ENCODE measurements at regions of chr6 and their contacts with region 1.

Region 1: GRCh38 chr6:144321839-144322591 is 36.9 kb downstream of the UTRN start:
- DNase-seq: no peak
- H3K4me3 ChIP-seq: no peak overlapping the region
- H3K27ac ChIP-seq: no peak overlapping the region
- H3K4me1 ChIP-seq: no peaks in the 10 kb centered on the region
- CTCF ChIP-seq: no peak

Region 2: GRCh38 chr6:142702501-142703460 is 1619.2 kb before region 1 on chr6:
- CTCF ChIA-PET with region 1: no interaction called
- POLR2A ChIA-PET with region 1: no interaction called
- intact Hi-C with region 1: no loop called
- DNase-seq: no peak
- H3K4me3 ChIP-seq: no peak overlapping the region
- H3K27ac ChIP-seq: no peak overlapping the region
- H3K4me1 ChIP-seq: peaks cover 18% of the 10 kb centered on the region
- CTCF ChIP-seq: no peak

Region 3: GRCh38 chr6:144340541-144341371 is 18.7 kb after region 1 on chr6:
- CTCF ChIA-PET with region 1: no interaction called
- POLR2A ChIA-PET with region 1: no interaction called
- intact Hi-C with region 1: no loop called
- DNase-seq: no peak
- H3K4me3 ChIP-seq: no peak overlapping the region
- H3K27ac ChIP-seq: no peak overlapping the region
- H3K4me1 ChIP-seq: peaks cover 53% of the 10 kb centered on the region
- CTCF ChIP-seq: no peak

Region 4: GRCh38 chr6:144482142-144482541 is 160.1 kb after region 1 on chr6:
- CTCF ChIA-PET with region 1: no interaction called
- POLR2A ChIA-PET with region 1: interaction called, 3 read pairs
- intact Hi-C with region 1: loop called (anchors 5 kb)
- DNase-seq: peak; percentile 75
- H3K4me3 ChIP-seq: no peak overlapping the region
- H3K27ac ChIP-seq: no peak overlapping the region
- H3K4me1 ChIP-seq: no peaks in the 10 kb centered on the region
- CTCF ChIP-seq: peak; percentile 83

Measured in OCI-LY7 (cell line).